Prostate gland (tissue), 2 donors: ENCODE measurements at regions of chr4 and their contacts with region 1.

Region 1: DNA sequence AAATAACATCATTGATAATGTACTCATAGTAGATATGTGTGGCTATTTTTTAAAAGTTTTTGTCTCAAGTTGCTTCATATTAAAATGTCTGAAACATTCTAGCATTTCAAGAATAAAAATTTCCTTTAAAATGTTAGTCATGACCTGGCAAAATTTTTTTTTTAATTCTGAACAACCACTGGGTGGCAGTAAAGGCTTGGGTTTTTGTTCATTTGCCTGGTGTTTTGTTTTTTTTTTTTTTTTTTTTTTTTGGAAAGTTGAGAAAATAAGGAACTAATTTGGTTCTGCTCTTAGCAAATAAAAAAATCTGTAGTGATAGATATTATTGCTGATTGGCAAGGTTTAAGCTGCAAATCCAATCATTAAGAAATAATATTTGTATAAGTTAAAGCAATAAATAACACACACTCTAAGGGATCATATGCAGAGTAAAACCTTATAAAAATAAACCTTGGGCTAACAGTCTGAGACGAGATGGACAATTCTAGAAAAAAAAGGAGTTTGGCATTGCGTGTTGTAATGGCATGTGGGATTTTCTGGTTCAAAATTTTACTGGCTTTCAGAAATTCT is 81.4 kb downstream of the CEP44 start:
- DNase-seq: no peak
- H3K4me3 ChIP-seq: no peak overlapping the region
- H3K27ac ChIP-seq: no peak overlapping the region
- H3K4me1 ChIP-seq: no peaks in the 10 kb centered on the region
- H3K27me3 ChIP-seq: no peaks in the 10 kb centered on the region
- CTCF ChIP-seq: peak in 3 of 4 experiments; percentile 35 to 54 (median 53)
- POLR2A ChIP-seq: no peak

Region 2: GRCh38 chr4:174631901-174632758 is 267.0 kb after region 1 on chr4:
- intact Hi-C with region 1: loop called (anchors 2 kb)
- DNase-seq: no peak
- H3K4me3 ChIP-seq: no peak overlapping the region
- H3K27ac ChIP-seq: no peak overlapping the region
- H3K4me1 ChIP-seq: no peaks in the 10 kb centered on the region
- H3K27me3 ChIP-seq: no peaks in the 10 kb centered on the region
- CTCF ChIP-seq: peak; percentile 44 to 86 (median 83)
- POLR2A ChIP-seq: no peak